ENCODE measurements at regions of chr9 and their contacts with region 1.

Region 1: DNA sequence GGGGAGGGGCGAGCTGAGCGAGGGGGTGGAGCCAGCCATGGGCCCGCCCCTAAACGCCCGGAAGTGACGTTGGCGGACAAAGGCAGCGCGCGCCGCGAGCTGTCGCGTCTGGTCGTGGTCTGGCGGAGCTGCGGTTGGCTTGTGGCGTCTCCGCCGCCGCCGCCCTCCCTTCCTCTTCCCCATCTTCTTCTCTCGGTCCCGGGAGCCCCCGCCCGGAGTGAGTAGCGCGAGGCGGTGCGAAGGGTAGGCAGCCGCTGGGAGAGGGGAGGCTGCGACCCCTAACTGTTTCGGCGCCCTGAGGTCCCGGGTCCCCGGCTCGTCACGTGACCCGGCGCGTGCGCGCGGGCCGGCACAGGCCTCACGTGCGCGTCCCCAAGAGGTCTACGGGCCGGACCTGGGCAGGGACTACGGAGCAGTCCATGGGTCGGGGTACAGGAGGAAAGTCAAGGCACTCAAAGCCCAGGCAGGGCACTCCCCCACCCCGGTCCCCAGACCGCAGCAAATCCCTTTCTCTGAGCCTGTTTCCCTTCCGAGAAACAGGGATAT is at the start of gene NTMT1:
- DNase-seq: peak; percentile 64
- ATAC-seq: peak; percentile 68
- H3K4me3 ChIP-seq: peak within 1 kb of the TSS; percentile 87
- H3K27ac ChIP-seq: peak within 1 kb of the TSS; percentile 61
- H3K4me1 ChIP-seq: peaks cover 19% of the 10 kb centered on the region
- H3K27me3 ChIP-seq: no peaks in the 10 kb centered on the region
- CTCF ChIP-seq: no peak
- total RNA-seq, gene NTMT1: 50.2 and 60.6 TPM in 2 replicates

Region 2: DNA sequence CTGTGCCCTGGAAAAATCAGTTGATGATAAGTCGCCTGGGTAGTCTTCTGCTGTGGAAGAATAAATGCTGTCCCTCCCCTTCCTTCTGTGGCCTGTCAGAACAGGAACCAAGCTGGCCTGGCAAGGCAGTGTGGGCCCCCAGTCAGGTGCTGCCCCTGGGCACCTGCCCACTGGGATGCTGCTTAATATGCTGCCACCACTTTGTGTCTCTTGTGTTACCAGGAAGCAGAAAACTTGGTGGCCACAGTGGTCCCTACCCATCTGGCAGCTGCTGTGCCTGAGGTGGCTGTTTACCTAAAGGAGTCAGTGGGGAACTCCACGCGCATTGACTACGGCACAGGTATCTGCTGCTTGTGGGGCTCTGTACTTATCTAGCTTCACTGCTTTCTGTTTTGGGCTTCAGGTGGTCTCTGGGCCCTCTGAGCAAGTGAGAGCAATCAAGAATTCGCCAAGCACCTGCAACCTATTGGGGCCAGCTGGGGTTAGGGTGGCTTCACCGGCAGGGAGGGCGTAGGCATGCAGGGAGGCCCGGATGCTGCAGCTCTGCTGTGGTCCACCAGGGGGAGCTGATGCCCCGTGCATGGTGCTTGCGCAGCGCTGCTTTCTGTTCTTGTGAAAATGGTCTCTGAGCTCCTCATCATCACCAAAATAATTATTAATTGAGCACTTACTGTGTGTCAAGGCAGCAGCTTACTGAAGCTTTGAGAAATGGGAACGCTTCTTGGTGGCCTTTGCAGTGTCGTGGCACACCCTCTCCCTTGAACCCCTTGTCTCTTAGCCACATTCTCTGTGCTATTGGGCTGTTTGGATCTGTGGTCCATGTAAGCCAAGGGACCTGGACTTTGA is 494.6 kb before region 1 on chr9:
- CTCF ChIA-PET with region 1: interaction called, 13 read pairs
- POLR2A ChIA-PET with region 1: no interaction called
- intact Hi-C with region 1: no loop called
- DNase-seq: peak; percentile 68
- ATAC-seq: peak; percentile 91
- H3K4me3 ChIP-seq: no peak overlapping the region
- H3K27ac ChIP-seq: no peak overlapping the region
- H3K4me1 ChIP-seq: no peaks in the 10 kb centered on the region
- H3K27me3 ChIP-seq: no peaks in the 10 kb centered on the region
- CTCF ChIP-seq: peak; percentile 88

Region 3: DNA sequence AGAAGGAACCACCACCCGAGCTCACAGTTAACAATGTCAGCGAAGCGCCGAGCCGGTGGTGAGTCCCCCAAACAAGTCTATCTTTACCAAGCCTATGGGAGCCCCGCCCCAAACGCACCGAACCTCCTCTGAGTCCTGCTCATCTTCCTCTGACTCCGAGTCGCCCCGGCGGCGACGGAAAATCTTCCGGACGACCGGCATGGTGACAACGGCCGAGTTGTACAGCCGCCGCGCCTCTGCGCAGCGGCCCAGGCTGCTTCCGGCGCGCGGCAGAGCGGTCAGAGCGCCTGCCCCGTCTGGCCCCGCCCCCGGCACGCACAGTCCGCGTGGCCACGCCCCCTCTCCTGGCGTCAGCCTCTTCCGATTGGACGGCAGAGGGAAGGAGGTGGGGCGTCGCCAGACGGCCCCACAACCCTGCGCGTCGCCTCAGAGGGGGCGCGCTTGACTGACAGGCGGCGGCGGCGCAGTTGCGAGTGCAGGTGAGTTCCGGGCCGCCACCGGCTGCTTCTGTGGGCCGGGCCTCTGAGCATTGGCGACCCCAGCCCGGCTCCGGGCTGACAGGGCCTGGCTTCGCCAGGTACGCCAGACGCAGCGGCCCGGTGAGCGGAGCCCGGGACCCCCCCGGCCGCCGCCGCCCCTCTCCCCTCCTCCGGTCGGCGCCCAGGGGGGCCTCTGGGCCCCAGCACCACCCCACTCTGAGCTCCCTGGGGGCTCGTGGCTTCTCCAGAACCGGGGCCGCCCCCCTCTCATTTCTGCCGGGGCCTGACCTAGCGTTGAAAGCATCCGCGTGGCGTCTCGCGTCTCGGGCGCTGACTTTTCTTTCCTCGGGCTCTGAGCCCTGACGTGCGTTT is 209.1 kb after region 1 on chr9 and contains the starts of genes C9orf78 and USP20:
- CTCF ChIA-PET with region 1: no interaction called
- POLR2A ChIA-PET with region 1: no interaction called
- intact Hi-C with region 1: no loop called
- DNase-seq: peak; percentile 95
- ATAC-seq: peak; percentile 82
- H3K4me3 ChIP-seq: peak within 1 kb of the TSS; percentile 82
- H3K27ac ChIP-seq: no peak within 1 kb of the TSS
- H3K4me1 ChIP-seq: peaks cover 33% of the 10 kb centered on the region
- H3K27me3 ChIP-seq: no peaks in the 10 kb centered on the region
- CTCF ChIP-seq: no peak
- total RNA-seq, gene C9orf78: 42.4 and 57.4 TPM in 2 replicates
- total RNA-seq, gene USP20: 15.0 and 16.2 TPM in 2 replicates